ENCODE measurements at regions of chr6 and their contacts with region 1.

Region 1: DNA sequence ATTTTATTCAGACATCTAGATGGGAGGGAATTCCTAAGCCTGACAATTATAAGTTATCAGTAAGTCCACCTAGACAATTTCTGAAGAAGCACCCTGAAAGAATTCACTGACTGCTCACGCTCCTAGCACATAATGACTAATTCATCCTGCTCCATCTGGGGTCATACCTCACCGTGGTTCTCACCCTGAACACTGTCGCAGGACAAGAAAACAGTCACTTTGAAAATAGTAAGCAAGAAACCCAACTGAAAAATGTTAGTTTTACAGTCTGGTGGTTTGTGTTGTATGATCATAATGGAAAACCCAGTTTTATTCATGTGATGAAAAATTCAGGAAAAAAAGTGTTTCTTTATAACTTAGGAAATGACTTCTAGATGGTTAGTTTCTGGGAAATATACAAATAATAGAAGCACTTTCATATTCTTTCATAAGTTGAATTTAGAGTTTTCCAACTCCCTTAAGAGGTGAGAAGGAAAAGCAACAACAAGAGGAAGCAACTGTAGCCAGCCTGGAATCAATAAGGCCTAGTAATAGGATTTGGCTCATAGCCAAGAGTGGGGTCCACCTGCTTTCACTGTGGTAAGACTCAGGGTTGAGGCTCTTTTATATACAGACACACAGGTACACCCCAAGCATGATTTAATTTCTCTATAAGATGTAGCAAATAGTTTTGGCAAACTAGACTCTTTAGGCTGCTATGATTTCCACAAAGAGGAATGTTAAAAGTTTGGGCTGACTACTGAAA is 94.1 kb downstream of the HIVEP2 start:
- DNase-seq: peak in 1 of 2 donors; percentile 72
- ATAC-seq: peak; percentile 63 to 90 (median 84)
- H3K4me3 ChIP-seq: no peak overlapping the region
- H3K4me3 Mint-ChIP-seq: no peak overlapping the region
- H3K27ac ChIP-seq: no peak overlapping the region
- H3K27ac Mint-ChIP-seq: peak overlapping the region; percentile 53 to 59
- H3K4me1 ChIP-seq: peaks cover 27% of the 10 kb centered on the region
- H3K4me1 Mint-ChIP-seq: peaks cover 34 to 52% of the 10 kb centered on the region in 2 donors
- H3K27me3 ChIP-seq: no peaks in the 10 kb centered on the region
- H3K27me3 Mint-ChIP-seq: no peaks in the 10 kb centered on the region
- CTCF ChIP-seq: no peak

Region 2: GRCh38 chr6:142746524-142746923 is 104.3 kb before region 1 on chr6:
- intact Hi-C with region 1: loop called (anchors 10 kb)
- DNase-seq: peak in 1 of 2 donors; percentile 71
- ATAC-seq: peak; percentile 63 to 70 (median 64)
- H3K4me3 ChIP-seq: no peak overlapping the region
- H3K4me3 Mint-ChIP-seq: no peak overlapping the region
- H3K27ac ChIP-seq: no peak overlapping the region
- H3K27ac Mint-ChIP-seq: no peak overlapping the region
- H3K4me1 ChIP-seq: no peaks in the 10 kb centered on the region
- H3K4me1 Mint-ChIP-seq: no peaks in the 10 kb centered on the region
- H3K27me3 ChIP-seq: no peaks in the 10 kb centered on the region
- H3K27me3 Mint-ChIP-seq: peaks cover 6 to 13% of the 10 kb centered on the region in 2 donors
- CTCF ChIP-seq: peak; percentile 51

Region 3: GRCh38 chr6:143196525-143197215 is 345.8 kb after region 1 on chr6:
- intact Hi-C with region 1: no loop called
- DNase-seq: no peak
- ATAC-seq: no peak
- H3K4me3 ChIP-seq: no peak overlapping the region
- H3K4me3 Mint-ChIP-seq: no peak overlapping the region
- H3K27ac ChIP-seq: no peak overlapping the region
- H3K27ac Mint-ChIP-seq: no peak overlapping the region
- H3K4me1 ChIP-seq: no peaks in the 10 kb centered on the region
- H3K4me1 Mint-ChIP-seq: no peaks in the 10 kb centered on the region
- H3K27me3 ChIP-seq: no peaks in the 10 kb centered on the region
- H3K27me3 Mint-ChIP-seq: peaks cover 0 to 3% of the 10 kb centered on the region in 2 donors
- CTCF ChIP-seq: no peak

Measured in natural killer cell (primary cell).